Posterior vena cava (tissue), 2 donors: ENCODE measurements at regions of chr22 and their contacts with region 1.

Region 1: GRCh38 chr22:36180038-36180880 is 19.7 kb upstream of the APOL3 start:
- DNase-seq: peak; percentile 96

Region 2: GRCh38 chr22:36144886-36145541 is 35.2 kb before region 1 on chr22:
- intact Hi-C with region 1: loop called in 1 of 2 experiments (anchors 2 kb)
- DNase-seq: no peak

Region 3: DNA sequence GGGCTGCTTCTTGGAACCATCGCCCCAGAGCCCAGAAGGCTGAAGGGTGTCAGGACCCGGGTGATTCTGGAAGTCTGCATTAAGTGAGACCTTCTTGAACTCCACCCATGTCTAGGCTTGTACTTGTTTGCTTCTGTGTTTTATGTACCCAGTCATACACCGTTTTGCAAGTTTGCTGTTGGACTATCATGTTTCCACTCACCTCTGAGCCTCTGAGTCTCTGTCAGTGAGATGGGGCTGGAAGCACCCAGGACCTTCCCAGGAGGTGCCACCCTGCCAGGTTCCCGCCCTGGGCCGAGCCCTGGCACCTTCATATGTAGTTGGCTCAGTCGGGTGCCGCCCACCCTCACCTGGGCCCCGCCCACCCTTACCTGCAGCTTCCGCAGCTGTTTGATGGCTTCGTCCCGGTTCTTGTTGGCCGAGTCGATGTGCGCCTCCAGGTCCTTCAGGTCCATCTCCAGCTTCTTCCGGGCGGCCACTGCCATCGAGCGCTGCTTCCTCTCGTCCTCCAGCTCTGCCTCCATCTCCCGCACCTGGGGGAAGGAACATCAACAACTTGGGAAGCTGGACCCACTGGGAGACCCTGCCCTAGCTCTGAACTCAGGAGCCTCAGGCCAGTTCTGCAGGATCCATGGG is 107.7 kb after region 1 on chr22:
- intact Hi-C with region 1: no loop called
- DNase-seq: peak; percentile 81